Natural killer cell (primary cell): ENCODE measurements at regions of chr12 and their contacts with region 1.

Region 1: DNA sequence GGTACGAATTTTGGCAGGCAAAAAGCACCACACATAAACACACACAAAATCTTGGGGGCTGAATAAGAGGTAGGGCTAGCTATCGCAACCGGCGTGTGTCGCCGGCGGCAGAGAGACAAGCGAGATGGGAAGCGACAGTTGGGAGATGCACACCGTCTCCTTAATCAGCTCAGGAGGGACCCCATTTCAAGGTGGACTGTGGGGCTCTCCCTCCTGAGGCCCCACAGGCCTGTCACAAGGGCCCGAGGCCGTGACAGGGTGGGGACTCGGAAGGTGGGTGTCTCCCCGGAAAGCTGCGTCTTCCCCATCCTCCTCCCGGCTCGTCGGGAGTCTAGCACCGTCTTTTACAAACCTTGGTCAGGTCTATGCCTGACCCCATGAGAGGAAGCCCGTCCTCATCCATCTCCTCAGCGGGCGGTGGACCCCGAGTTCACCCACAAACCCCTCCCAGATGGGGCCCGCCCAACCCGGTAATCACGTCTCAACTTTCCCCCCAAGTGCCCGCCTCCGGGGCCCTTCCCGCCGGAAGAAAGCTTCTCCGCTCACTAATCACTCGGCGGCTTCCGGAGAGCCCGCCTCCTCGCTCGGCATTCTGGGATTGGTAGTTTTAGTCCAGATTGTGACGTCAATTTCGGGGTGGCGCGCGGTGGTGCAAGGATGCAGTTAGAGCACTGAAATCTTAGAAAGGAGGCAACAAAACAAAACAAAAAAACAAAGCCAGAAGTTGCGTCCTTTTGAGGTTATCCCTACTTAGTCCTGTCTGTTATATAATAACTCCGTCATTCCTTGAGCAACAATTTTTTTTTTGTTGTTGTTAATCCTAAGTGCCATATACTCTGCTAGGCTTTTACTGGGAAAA is at the start of gene WASHC3:
- DNase-seq: peak; percentile 90 to 96
- ATAC-seq: peak; percentile 92 to 97 (median 94)
- H3K4me3 ChIP-seq: peak within 1 kb of the TSS; percentile 72
- H3K4me3 Mint-ChIP-seq: peak within 1 kb of the TSS; percentile 96
- H3K27ac ChIP-seq: peak within 1 kb of the TSS; percentile 90
- H3K27ac Mint-ChIP-seq: peak within 1 kb of the TSS; percentile 97 to 99
- H3K4me1 ChIP-seq: peaks cover 8% of the 10 kb centered on the region
- H3K4me1 Mint-ChIP-seq: peaks cover 14 to 23% of the 10 kb centered on the region in 2 donors
- H3K27me3 ChIP-seq: no peaks in the 10 kb centered on the region
- H3K27me3 Mint-ChIP-seq: peaks cover 0 to 8% of the 10 kb centered on the region in 2 donors
- CTCF ChIP-seq: no peak
- total RNA-seq, gene WASHC3: 34.6 to 43.2 (median 41.4) TPM

Region 2: DNA sequence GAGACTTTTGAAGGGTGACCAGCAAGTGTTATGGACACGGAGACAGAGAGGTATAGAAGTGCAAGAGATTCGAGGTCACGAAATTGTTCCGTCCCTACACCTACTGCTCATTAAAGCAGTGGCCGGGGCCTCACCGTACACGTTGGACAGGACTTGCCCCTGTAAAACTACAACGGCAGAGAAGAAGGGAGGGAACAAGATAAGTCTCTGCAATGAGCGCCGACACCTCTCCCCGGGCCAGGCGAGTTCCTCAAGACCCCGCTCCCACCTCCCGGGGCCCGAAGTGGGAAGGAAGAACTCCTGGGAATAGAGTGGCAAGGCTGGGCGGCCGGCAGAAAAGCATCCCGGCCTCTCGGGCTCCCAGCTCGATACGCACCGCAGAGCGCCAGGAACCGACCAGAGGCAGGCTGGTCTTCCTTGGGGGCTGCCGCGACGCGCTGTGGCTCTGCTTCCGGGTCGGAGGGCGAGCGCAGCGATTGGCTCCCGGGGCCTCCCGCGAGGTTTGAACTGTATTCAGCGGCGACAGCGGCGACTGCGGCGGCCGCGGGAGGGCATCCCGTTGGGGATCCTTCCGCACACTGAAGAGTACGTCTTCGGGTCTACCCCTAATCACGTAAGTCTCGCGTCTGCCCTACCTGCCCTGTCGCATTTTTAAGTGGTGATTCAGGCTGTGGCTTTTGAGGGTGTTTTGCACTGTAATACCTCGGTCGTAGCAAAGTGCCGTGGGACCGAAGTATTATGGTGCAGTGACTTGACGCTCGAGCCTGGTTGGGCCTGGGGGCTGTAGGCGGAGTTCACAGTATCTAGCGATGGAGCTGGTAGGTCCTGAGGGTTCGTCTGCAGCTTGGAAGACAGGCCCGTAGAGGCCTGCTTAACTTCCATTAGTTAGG is 58.1 kb after region 1 on chr12 and contains the starts of genes NUP37 and PARPBP:
- intact Hi-C with region 1: loop called (anchors 1 kb)
- DNase-seq: peak; percentile 94 to 95
- ATAC-seq: peak; percentile 93 to 95 (median 94)
- H3K4me3 ChIP-seq: peak within 1 kb of the TSS; percentile 76
- H3K4me3 Mint-ChIP-seq: peak within 1 kb of the TSS; percentile 92
- H3K27ac ChIP-seq: peak within 1 kb of the TSS; percentile 80
- H3K27ac Mint-ChIP-seq: peak within 1 kb of the TSS; percentile 89 to 94
- H3K4me1 ChIP-seq: peaks cover 5% of the 10 kb centered on the region
- H3K4me1 Mint-ChIP-seq: peaks cover 16 to 17% of the 10 kb centered on the region in 2 donors
- H3K27me3 ChIP-seq: no peaks in the 10 kb centered on the region
- H3K27me3 Mint-ChIP-seq: no peaks in the 10 kb centered on the region
- CTCF ChIP-seq: no peak
- total RNA-seq, gene NUP37: 10.6 to 14.7 (median 10.7) TPM
- total RNA-seq, gene PARPBP: 2.8 to 5.6 (median 3.5) TPM